GM10248 (cell line): ENCODE measurements at regions of chr22 and their contacts with region 1.

Region 1: DNA sequence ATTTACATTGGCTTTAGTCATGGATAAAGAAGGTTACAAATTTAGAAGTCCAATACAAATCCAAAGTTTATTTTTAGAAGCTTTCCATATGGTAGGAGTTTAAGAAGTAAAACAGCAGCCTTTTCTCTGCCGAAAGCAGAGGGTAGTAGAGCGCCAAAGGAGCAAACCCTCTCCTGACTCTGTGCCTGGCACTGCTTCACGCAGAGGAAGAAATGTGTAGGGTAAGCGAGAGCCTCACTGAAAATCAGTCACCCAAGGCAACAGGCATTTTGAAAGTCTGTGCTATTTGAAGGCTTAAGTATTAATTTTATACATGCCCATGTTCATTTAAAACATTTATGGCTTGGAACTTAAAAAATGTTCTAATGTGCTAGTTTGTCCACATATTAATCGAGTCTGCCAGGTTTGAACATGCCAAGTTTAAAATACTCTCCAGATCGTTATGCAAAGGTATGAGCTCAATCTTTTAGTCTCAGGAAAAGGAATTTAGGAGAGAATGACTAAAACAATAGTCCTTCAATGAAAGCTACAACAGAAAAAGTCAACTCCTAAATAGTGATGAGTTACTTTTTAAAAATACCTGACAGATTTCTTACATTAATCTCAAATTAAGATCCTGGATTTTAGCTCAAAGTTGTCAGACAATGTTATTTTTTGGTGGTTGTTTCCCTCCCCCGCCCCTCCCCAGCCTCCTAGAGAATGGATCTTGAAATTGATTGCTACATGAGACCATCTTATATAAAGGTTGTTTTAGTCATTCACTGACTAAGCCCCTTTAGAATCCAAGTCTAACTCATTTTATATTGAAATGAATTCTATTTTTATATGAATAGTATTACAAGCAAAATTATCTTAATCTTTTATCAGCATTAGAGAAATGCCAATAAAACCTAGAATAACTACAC is 38.7 kb downstream of the MRTFA start:
- DNase-seq: no peak
- CTCF ChIP-seq: no peak

Region 2: GRCh38 chr22:40583053-40583741 is 14.6 kb before region 1 on chr22:
- CTCF ChIA-PET with region 1: interaction called, 16 read pairs
- POLR2A ChIA-PET with region 1: no interaction called
- DNase-seq: peak; percentile 54
- CTCF ChIP-seq: no peak